Activated CD8-positive, alpha-beta T cell treated with anti-CD3 and anti-CD28 coated beads, Interleukin-2, amount 10 ng/mL, durations not matched to agents 7 days and 5 days (primary cell): ENCODE measurements at regions of chr1 and their contacts with region 1.

Region 1: GRCh38 chr1:156728597-156729462 is at the start of gene ISG20L2:
- DNase-seq: peak; percentile 99
- ATAC-seq: peak; percentile 90
- H3K4me3 Mint-ChIP-seq: no peak within 1 kb of the TSS
- H3K27ac Mint-ChIP-seq: no peak within 1 kb of the TSS
- H3K4me1 Mint-ChIP-seq: peaks cover 29% of the 10 kb centered on the region
- H3K27me3 Mint-ChIP-seq: no peaks in the 10 kb centered on the region
- total RNA-seq, gene ISG20L2: 56.3 to 58.8 TPM

Region 2: DNA sequence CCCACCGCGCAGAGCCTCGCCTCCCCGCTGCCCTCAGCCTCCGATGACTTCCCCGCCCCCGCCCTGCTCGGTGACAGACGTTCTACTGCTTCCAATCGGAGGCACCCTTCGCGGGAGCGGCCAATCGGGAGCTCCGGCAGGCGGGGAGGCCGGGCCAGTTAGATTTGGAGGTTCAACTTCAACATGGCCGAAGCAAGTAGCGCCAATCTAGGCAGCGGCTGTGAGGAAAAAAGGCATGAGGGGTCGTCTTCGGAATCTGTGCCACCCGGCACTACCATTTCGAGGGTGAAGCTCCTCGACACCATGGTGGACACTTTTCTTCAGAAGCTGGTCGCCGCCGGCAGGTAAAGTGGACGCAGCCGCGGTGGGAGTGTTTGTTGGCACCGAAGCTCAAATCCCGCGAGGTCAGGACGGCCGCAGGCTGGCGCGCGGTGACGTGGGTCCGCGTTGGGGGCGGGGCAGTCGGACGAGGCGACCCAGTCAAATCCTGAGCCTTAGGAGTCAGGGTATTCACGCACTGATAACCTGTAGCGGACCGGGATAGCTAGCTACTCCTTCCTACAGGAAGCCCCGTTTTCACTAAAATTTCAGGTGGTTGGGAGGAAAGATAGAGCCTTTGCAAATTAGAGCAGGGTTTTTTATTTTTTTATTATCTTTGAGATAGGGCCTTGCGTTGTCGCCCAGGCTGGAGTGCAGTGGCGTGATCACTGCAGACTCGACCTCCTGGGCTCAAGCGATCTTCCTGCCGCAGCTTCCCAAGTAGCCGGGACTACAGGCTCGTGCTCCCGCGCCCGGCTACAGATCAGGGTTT is 515.8 kb before region 1 on chr1 and contains the start of gene PMF1:
- CTCF ChIA-PET with region 1: no interaction called
- POLR2A ChIA-PET with region 1: no interaction called
- DNase-seq: peak; percentile 98
- ATAC-seq: peak; percentile 96
- H3K4me3 Mint-ChIP-seq: peak within 1 kb of the TSS; percentile 96
- H3K27ac Mint-ChIP-seq: peak within 1 kb of the TSS; percentile 99
- H3K4me1 Mint-ChIP-seq: peaks cover 45% of the 10 kb centered on the region
- H3K27me3 Mint-ChIP-seq: no peaks in the 10 kb centered on the region
- total RNA-seq, gene PMF1: 72.3 to 77.3 TPM

Region 3: DNA sequence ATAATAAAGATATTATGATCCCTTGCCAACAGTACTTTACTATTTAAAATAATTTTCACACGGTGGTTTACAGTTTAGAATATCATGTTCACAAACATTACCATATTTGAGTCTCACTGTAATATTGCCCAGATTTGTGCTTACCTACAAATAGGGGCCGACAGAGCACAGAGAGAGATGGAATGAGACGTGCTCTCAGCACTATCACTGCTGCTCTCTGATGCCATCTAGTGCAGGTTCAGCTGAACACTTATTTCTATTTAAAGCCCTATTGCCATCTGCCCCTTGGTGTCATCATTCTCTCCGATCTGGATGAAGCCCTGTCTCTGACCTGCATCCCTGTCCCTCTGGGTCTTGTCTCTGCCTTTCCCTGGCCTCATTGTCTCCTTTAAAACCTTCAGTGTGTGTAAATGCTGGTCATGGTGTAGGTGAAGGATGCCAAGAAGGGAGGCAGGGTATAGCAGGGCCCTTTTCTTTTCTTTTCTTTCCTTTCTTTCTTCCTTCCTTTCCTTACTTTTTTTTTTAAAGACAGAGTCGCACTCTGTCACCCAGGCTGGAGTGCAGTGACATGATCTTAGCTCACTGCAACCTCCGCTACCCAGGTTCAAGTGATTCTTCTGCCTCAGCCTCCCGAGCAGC is 120.7 kb before region 1 on chr1:
- CTCF ChIA-PET with region 1: interaction called, 10 read pairs
- POLR2A ChIA-PET with region 1: no interaction called
- DNase-seq: peak; percentile 83
- ATAC-seq: peak; percentile 96
- H3K4me3 Mint-ChIP-seq: no peak overlapping the region
- H3K27ac Mint-ChIP-seq: no peak overlapping the region
- H3K4me1 Mint-ChIP-seq: peaks cover 15% of the 10 kb centered on the region
- H3K27me3 Mint-ChIP-seq: peaks cover 16% of the 10 kb centered on the region

Region 4: DNA sequence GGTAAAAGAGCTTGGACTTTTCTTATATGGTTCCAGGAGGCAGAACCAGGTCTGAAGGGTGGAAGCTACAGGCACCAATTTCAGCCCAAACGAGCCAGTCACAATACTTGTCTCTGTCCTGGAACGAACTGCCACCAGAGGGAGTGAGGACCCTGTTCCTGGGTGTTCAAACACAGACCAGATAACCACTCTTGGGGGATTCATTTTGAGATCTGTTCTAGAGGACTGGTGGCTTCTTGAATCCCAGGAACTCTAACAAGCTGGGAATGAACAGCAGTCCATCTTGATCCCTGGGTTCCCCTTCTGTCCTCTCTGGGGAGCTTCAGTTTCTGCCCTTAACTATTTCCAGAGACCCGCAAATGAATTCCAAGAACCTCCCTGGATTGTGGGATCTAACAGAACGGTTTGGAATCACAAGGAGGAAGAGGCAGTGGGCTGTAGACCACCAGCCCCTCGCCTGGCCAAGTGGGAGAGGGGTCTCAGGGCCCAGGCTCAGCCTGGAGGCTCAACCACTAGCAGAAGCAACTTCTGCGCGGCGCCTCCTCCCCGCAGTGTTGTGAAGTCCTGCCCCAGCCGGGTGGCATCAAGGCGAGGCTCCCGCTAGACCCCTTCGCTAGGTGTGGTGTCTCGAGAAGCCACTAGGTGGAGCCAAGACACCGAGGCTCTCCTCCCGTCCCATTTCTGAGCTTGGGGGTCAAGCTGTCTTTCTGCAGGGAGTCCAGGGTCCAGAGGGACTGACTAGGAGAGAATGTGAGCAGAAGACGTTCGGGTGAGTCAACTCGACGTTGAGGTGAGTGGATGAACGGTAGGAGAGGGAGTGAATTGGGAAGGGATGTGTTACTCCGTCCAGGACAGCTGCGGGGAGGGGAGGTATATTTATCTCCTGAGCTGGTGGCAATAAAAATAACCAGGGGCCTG is 39.5 kb before region 1 on chr1:
- CTCF ChIA-PET with region 1: interaction called, 543 read pairs
- POLR2A ChIA-PET with region 1: interaction called, 16 read pairs
- DNase-seq: peak; percentile 83
- ATAC-seq: peak; percentile 97
- H3K4me3 Mint-ChIP-seq: no peak overlapping the region
- H3K27ac Mint-ChIP-seq: no peak overlapping the region
- H3K4me1 Mint-ChIP-seq: peaks cover 36% of the 10 kb centered on the region
- H3K27me3 Mint-ChIP-seq: peaks cover 55% of the 10 kb centered on the region

Region 5: GRCh38 chr1:156746728-156747631 is 18.1 kb after region 1 on chr1:
- CTCF ChIA-PET with region 1: interaction called, 90 read pairs
- POLR2A ChIA-PET with region 1: interaction called, 68 read pairs
- DNase-seq: peak; percentile 69
- ATAC-seq: no peak
- H3K4me3 Mint-ChIP-seq: peak overlapping the region; percentile 95
- H3K27ac Mint-ChIP-seq: peak overlapping the region; percentile 96
- H3K4me1 Mint-ChIP-seq: peaks cover 64% of the 10 kb centered on the region
- H3K27me3 Mint-ChIP-seq: no peaks in the 10 kb centered on the region

Region 6: GRCh38 chr1:156797212-156797871 is 68.5 kb after region 1 on chr1:
- CTCF ChIA-PET with region 1: interaction called, 45 read pairs
- POLR2A ChIA-PET with region 1: no interaction called
- DNase-seq: peak; percentile 81
- ATAC-seq: peak; percentile 76
- H3K4me3 Mint-ChIP-seq: no peak overlapping the region
- H3K27ac Mint-ChIP-seq: no peak overlapping the region
- H3K4me1 Mint-ChIP-seq: peaks cover 24% of the 10 kb centered on the region
- H3K27me3 Mint-ChIP-seq: no peaks in the 10 kb centered on the region

Region 7: DNA sequence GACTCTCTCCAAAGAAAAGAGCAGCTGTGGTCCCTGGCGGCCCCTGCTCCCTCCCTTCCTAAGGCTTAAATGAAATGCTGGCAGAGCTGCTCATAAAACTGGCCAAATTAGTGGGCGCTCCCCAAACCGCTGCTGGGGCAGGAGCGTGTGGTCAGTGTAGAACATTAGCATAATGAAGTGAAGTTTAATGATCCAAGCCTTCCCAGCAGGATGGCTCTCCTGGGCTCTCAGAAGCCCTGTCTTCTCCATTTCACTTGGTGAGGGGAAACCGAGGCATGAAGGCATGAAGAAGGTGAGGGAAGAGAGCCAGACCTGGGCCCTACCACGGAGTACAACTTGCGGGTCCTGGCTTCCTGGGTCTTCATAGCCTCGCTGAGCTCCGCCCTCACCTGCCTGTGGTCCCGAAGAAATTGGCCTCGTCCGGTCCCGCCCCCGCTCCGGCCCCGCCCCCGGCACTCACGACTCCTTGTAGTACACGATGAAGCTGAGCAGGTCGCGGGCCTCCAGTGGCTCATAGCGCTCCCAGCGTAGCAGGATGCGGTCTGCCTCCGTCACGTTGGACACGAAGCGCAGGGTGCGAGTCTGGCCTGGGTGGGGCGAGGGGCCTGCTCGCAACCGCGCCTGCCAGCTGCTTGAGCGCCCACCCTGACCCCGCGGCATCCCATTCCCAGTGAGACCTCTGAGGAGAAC is 119.8 kb after region 1 on chr1:
- CTCF ChIA-PET with region 1: interaction called, 15 read pairs
- POLR2A ChIA-PET with region 1: no interaction called
- DNase-seq: peak; percentile 93
- ATAC-seq: peak; percentile 89
- H3K4me3 Mint-ChIP-seq: peak overlapping the region; percentile 56
- H3K27ac Mint-ChIP-seq: peak overlapping the region; percentile 86
- H3K4me1 Mint-ChIP-seq: peaks cover 49% of the 10 kb centered on the region
- H3K27me3 Mint-ChIP-seq: peaks cover 30% of the 10 kb centered on the region

Region 8: DNA sequence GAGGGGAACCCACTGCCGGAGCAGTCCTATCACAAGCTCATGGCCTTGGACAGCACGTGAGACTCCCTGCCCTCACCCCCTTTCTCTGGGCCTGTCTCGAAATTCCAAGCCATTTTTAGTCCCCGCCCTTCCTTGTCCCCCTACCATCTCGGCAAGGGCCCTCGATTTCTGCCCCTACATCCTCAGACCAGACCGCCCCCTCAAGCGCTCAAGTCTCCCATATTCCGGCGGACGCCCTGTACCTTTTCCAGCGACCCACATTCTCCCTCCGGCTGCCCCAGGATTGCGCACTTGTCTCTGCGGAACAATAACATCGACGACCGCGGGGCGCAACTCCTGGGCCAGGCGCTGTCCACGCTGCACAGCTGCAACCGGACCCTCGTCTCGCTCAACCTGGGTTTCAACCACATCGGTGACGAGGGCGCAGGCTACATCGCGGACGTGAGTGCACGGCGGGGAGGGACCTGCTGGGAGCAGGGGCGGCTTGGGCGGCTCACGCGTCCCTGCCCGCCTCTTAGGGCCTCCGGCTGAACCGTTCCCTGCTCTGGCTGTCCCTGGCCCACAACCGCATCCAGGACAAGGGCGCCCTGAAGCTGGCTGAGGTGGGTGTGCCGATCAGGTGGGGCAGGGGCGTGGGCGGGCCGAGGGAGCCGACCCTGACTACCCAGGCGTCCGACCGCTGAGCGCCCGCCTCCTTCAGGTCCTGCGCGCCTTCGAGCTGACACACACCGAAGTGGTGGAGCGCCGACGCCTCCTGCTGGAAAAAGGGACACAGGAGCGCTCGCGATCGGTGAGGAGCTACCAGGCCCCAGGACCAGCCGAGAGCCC is 198.6 kb after region 1 on chr1:
- CTCF ChIA-PET with region 1: interaction called, 18 read pairs
- POLR2A ChIA-PET with region 1: no interaction called
- DNase-seq: peak; percentile 81
- ATAC-seq: peak; percentile 82
- H3K4me3 Mint-ChIP-seq: peak overlapping the region; percentile 20
- H3K27ac Mint-ChIP-seq: no peak overlapping the region
- H3K4me1 Mint-ChIP-seq: peaks cover 38% of the 10 kb centered on the region
- H3K27me3 Mint-ChIP-seq: peaks cover 77% of the 10 kb centered on the region